GM13977 (cell line): ENCODE measurements at regions of chr5 and their contacts with region 1.

Region 1: DNA sequence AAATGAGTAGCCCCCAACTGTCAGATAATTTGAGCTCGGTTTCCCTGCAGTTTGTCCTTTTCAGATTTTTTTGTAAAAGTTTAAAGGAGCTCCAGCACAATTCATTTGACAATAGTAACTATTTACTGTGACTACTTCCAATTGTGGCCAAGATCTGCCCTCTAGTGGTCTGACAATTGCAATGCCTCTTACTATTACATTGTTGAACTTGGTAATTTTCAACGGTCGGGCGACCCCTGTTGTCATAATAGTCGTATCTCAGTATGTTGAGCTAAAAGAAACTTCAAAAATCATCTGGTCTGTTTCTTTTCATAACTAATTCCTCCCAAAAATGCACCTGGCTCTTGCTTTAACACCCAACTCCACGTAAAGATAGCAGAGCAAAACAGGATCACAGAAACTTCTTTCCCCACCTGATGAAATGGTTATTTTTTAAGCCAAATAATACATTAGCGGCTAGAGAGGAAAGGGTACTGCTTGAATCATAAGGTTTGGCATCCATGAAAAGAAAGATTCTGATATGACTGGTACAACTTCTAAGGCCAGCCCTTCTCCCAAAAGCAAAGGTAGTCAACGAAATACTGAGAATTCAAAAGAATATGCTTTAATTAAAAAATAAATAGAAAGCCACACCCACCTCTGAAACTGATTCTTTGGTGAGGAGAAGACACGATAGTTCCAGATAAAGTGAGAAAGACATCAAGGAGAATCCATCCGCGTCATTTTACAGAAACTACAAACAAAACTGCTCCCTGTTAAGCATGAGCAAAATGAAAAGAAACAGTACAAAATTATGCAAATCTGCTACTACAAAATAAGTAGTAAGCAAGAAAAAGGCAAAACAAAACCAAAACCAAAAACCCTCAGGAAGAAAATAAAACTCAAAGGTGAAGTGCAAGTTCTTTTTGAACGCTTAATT is 76.9 kb upstream of the HTR4 start:
- DNase-seq: peak; percentile 55
- CTCF ChIP-seq: peak; percentile 94

Region 2: DNA sequence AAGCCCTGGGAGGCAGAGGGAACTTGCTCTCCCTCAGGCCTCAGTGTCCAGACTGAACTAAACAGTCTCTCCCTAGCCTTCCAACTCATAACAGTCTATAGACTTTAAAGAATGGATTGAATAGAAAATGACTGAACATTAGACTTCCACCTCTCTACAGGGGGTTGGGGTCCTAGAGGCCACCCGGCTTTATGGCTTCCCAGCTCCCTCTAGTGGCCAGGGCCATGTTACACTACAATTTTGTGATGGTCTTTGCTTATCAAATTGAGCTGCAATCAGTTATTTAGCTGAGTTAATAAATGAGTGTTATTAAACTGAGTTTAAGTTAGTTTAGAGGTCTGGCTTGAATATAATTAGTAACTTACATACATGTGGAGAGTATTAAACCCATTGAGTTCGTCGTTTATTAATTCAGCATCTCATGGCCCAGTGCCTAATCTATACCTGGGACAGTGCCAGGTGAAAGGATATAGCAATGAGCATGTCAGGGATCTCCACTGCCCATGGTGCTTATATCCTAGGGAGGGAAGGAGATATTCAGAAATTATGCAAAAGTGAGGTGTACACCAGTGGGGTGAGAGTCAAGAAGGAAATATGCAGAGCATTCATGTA is 226.5 kb after region 1 on chr5:
- in situ Hi-C with region 1: loop called (anchors 10 kb)
- DNase-seq: peak; percentile 50
- CTCF ChIP-seq: peak; percentile 82

Region 3: GRCh38 chr5:149268928-149269557 is 537.8 kb after region 1 on chr5:
- in situ Hi-C with region 1: loop called (anchors 25 kb)
- DNase-seq: peak; percentile 79
- CTCF ChIP-seq: peak; percentile 65